ENCODE measurements at regions of chr9 and their contacts with region 1.

Region 1: GRCh38 chr9:32589083-32589723 is 16.2 kb upstream of the NDUFB6 start:
- DNase-seq: peak; percentile 38
- CTCF ChIP-seq: peak; percentile 39

Region 2: DNA sequence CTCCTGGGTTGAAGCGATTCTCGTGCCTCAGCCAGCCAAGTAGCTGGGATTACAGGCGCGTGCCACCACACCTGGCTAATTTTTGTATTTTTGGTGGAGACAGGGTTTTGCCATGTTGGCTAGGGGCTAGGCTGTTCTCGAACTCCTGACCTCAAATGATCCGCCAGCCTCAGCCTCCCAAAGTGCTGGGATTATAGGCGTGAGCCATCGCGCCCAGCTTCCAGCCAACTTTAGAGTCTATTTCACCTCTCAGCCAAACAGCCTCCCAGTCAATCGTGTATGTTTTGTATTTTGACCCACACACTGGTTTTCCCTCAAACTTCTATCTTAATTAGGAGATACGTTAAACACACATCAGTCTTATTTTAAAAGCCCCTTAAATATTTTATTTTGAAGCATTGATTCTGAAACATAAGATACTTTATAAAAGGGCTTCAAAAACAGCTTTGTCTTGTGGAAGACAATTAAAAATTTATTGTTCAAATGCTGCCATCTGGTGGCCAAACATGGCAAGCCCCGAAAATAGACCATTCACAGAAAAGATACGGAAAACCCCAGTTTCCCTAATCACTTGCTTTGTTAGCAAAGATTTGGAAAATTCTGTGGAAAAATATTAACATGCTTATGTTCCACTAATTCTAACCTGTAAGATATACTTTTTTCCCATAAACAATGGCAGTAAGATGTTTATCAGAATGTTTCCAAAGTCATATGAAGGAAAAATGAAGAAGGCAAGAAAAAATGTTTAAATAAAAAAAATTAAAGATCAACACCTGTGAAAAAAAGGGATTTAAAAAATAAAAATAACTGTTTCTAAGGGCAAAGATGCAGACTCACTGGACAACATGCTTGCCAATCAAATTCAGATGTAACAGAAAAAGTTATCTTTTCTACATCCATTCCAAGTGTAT is 379.2 kb after region 1 on chr9:
- CTCF ChIA-PET with region 1: interaction called, 168 read pairs
- POLR2A ChIA-PET with region 1: no interaction called
- DNase-seq: peak; percentile 56
- CTCF ChIP-seq: peak; percentile 68

Measured in GM10248 (cell line).